Activated CD4-positive, alpha-beta T cell treated with anti-CD3 and anti-CD28 coated beads for 36 hours (primary cell): ENCODE measurements at regions of chr4 and their contacts with region 1.

Region 1: DNA sequence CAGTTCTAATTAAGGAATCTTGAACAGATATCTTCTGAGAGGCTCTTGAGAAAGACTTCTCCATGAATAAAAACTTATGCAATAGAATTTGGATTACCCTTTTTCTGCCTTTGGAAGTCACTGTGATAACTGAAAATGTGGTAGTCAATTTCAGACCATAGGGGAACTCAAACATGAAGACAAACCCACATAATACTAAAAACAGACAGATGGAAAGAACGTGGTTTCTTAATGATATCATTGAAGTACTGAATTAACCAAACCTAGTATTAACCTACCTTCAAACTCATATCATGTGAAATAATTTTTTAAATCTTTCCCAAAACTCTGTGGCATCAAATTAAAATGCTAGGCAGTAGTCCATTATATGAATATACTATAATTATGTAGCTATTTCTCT is 153.5 kb downstream of the CAMK2D start:
- DNase-seq: no peak
- ATAC-seq: peak; percentile 81
- H3K4me3 Mint-ChIP-seq: no peak overlapping the region
- H3K27ac Mint-ChIP-seq: peak overlapping the region; percentile 61
- H3K4me1 Mint-ChIP-seq: peaks cover 35% of the 10 kb centered on the region
- H3K27me3 Mint-ChIP-seq: no peaks in the 10 kb centered on the region

Region 2: GRCh38 chr4:113564493-113564892 is 43.5 kb before region 1 on chr4:
- CTCF ChIA-PET with region 1: no interaction called
- POLR2A ChIA-PET with region 1: no interaction called
- intact Hi-C with region 1: loop called in 1 of 2 experiments (anchors 5 kb)
- DNase-seq: no peak
- ATAC-seq: no peak
- H3K4me3 Mint-ChIP-seq: no peak overlapping the region
- H3K27ac Mint-ChIP-seq: peak overlapping the region; percentile 17
- H3K4me1 Mint-ChIP-seq: peaks cover 39% of the 10 kb centered on the region
- H3K27me3 Mint-ChIP-seq: no peaks in the 10 kb centered on the region

Region 3: DNA sequence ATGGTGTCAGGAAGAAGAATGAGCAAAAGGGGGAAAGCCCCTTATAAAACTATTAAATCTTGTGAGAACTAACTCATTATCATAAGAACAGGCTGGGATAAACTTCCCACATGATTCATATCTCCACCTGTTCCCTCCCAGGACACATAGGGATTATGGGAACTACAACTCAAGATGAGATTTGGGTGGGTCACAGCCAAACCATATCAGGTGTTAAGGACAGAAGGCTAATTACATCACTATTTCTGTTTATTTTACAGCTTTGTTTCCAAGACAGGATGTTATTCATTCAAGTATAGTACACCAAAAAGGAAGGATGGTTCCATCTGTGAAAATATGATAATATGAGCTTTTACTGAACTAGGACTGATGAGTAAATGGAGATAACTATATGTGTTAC is 435.1 kb after region 1 on chr4:
- CTCF ChIA-PET with region 1: no interaction called
- POLR2A ChIA-PET with region 1: no interaction called
- intact Hi-C with region 1: no loop called
- DNase-seq: no peak
- ATAC-seq: no peak
- H3K4me3 Mint-ChIP-seq: no peak overlapping the region
- H3K27ac Mint-ChIP-seq: no peak overlapping the region
- H3K4me1 Mint-ChIP-seq: peaks cover 8% of the 10 kb centered on the region
- H3K27me3 Mint-ChIP-seq: no peaks in the 10 kb centered on the region

Region 4: DNA sequence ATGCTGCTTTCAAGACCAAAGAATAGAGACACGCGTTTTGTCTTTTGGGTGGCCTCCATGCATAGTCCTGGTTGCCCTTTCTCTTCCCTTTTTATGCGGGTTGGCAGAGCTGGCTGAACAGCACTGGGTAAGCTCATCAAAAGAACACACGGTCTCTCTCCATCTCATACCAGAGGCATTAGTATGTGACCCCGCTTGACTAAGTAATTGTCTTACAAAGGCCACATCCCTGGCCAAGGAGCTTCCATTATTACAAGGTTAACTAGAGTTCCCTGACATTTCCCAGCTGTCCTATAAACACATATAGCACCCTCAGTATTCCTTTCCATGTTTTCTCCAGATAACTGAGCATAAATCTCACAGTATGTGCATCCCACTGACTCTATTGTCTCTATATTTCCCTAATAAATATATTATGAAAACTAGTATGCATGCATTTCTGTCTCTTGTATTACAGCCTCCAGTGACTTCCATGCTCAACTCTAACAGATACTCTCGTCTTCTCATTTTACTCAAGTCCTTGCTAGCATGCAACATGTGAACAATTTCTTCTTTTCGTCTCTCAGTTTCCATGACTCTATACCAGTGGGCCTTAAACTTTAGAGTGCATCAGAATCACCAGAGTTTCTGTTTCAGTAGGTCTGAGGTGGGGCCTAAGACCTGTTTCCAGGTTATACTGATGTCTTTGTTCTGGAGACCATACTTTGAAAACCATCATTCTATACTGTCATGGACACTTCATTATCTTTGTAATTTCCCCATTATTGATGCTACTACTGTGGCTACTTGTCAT is 619.2 kb after region 1 on chr4:
- CTCF ChIA-PET with region 1: no interaction called
- POLR2A ChIA-PET with region 1: no interaction called
- intact Hi-C with region 1: no loop called
- DNase-seq: no peak
- ATAC-seq: no peak
- H3K4me3 Mint-ChIP-seq: no peak overlapping the region
- H3K27ac Mint-ChIP-seq: no peak overlapping the region
- H3K4me1 Mint-ChIP-seq: no peaks in the 10 kb centered on the region
- H3K27me3 Mint-ChIP-seq: no peaks in the 10 kb centered on the region